WTC11 (cell line): ENCODE measurements at regions of chr21 and their contacts with region 1.

Region 1: DNA sequence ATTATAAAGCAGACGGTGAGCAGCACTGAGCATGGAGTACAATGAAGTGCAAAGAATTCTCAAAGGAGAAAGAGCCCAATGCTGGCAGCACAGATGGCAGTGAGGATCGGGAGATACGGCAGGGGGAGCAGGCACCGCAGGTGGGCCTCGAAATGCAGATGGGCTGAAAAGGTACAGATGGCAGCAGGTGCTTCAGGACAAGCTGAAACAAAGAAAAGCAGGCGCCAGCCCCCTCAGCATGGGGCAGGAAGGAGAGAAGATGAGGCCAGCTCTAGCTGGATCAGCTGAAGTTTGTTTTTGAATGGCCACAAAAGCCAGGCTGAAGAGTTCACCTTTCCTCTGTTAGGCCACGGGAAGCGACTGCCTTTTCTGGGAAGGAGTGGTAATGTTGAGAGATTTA is 7.7 kb downstream of the CFAP298 start:
- DNase-seq: peak; percentile 87
- ATAC-seq: peak; percentile 84
- H3K4me3 Mint-ChIP-seq: peak overlapping the region; percentile 53
- H3K27ac Mint-ChIP-seq: peak overlapping the region; percentile 95
- H3K4me1 Mint-ChIP-seq: peaks cover 65% of the 10 kb centered on the region
- H3K27me3 Mint-ChIP-seq: no peaks in the 10 kb centered on the region; the same call in 1 of the 2 replicates
- CTCF ChIP-seq: no peak

Region 2: GRCh38 chr21:32278518-32279376 is 325.7 kb before region 1 on chr21 and contains the start of gene MIS18A:
- CTCF ChIA-PET with region 1: interaction called, 12 read pairs
- POLR2A ChIA-PET with region 1: no interaction called
- DNase-seq: peak; percentile 96
- ATAC-seq: peak; percentile 92
- H3K4me3 Mint-ChIP-seq: peak within 1 kb of the TSS; percentile 99
- H3K27ac Mint-ChIP-seq: peak within 1 kb of the TSS; percentile 96
- H3K4me1 Mint-ChIP-seq: peaks cover 16% of the 10 kb centered on the region
- H3K27me3 Mint-ChIP-seq: no peaks in the 10 kb centered on the region
- CTCF ChIP-seq: no peak
- total RNA-seq, gene MIS18A: 55.9 to 60.6 TPM (median 58.4 TPM) in 3 replicates

Region 3: DNA sequence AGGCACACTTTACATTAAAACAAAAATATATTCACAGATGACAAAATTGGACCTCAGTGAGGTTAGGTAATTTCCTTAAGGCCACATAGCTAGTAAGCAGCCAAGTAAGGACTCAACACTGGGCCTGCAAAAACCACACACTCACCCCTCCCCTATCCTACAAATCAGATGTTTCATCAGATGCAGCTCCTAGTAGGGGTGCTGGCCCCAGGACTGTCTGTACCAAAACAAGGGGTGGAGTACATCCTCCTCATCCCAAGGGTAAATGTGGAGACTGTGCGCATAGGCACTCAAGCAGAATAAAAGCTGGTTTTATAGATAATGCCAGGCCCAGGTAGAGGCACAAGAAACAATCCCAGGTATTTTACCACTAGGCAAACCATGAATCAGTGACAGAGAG is 237.3 kb before region 1 on chr21:
- CTCF ChIA-PET with region 1: interaction called, 11 read pairs
- POLR2A ChIA-PET with region 1: no interaction called
- DNase-seq: no peak
- ATAC-seq: no peak
- H3K4me3 Mint-ChIP-seq: no peak overlapping the region
- H3K27ac Mint-ChIP-seq: no peak overlapping the region
- H3K4me1 Mint-ChIP-seq: peaks cover 3% of the 10 kb centered on the region
- H3K27me3 Mint-ChIP-seq: no peaks in the 10 kb centered on the region
- CTCF ChIP-seq: no peak

Region 4: GRCh38 chr21:32412162-32413014 is 192.1 kb before region 1 on chr21 and contains the start of gene EVA1C:
- CTCF ChIA-PET with region 1: interaction called, 24 read pairs
- POLR2A ChIA-PET with region 1: interaction called, 4 read pairs
- DNase-seq: peak; percentile 60
- ATAC-seq: peak; percentile 80
- H3K4me3 Mint-ChIP-seq: peak within 1 kb of the TSS; percentile 83
- H3K27ac Mint-ChIP-seq: no peak within 1 kb of the TSS
- H3K4me1 Mint-ChIP-seq: peaks cover 33% of the 10 kb centered on the region
- H3K27me3 Mint-ChIP-seq: peaks cover 60% of the 10 kb centered on the region
- CTCF ChIP-seq: no peak
- total RNA-seq, gene EVA1C: 2.3 to 3.6 TPM (median 3.1 TPM) in 3 replicates

Region 5: DNA sequence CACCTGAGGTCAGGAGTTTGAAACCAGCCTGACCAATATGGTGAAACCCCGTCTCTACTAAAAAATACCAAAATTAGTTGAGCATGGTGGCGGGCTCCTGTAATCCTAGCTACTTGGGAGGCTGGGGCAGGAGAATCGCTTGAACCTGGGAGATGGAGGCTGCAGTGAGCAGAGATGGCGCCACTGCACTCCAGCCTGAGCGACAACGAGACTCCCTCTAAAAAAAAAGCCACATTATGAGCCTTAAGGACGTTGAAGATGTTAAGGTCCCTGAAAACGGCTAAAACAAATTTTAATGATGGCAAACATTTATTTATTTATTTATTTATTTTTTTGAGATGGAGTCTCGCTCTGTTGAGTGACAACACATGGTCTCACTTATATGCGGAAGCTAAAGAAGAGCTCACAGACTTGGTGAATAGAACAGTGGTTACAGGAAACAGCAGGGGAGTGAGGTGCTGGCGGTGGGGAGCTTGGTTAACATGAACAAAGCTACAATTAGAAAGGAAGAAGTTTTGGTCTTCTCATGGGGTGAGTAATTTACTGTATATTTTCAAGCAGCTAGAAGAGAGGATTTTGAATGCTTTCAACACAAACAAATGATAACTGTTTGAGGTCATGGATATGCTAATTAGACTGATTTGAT is 66.2 kb before region 1 on chr21:
- CTCF ChIA-PET with region 1: interaction called, 10 read pairs
- POLR2A ChIA-PET with region 1: no interaction called
- DNase-seq: no peak
- ATAC-seq: peak; percentile 72
- H3K4me3 Mint-ChIP-seq: no peak overlapping the region
- H3K27ac Mint-ChIP-seq: peak overlapping the region; percentile 82
- H3K4me1 Mint-ChIP-seq: peaks cover 15% of the 10 kb centered on the region
- H3K27me3 Mint-ChIP-seq: no peaks in the 10 kb centered on the region
- CTCF ChIP-seq: no peak

Region 6: DNA sequence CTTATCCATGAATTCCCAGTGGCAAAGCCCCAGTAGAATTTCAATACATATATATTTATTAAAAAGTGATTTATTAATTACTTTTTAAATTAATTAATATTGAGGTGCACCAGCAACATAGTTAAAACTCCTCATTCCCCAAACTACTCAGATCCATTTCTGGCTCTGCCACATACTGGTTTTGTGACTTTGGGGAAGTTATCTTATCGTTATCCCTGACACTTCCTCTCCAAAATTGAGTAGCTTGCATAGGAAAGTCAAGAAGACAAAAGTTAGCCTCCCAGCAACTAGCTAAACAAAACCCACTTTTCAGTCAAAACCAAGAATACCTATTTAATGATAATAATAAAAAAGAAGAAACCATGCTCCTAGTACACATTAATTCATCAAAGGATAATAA is 55.0 kb before region 1 on chr21:
- CTCF ChIA-PET with region 1: no interaction called
- POLR2A ChIA-PET with region 1: no interaction called
- DNase-seq: no peak
- ATAC-seq: no peak
- H3K4me3 Mint-ChIP-seq: no peak overlapping the region
- H3K27ac Mint-ChIP-seq: no peak overlapping the region
- H3K4me1 Mint-ChIP-seq: peaks cover 9% of the 10 kb centered on the region
- H3K27me3 Mint-ChIP-seq: no peaks in the 10 kb centered on the region; the same call in 1 of the 2 replicates
- CTCF ChIP-seq: no peak

Region 7: GRCh38 chr21:32562426-32562825 is 42.0 kb before region 1 on chr21:
- CTCF ChIA-PET with region 1: interaction called, 21 read pairs
- POLR2A ChIA-PET with region 1: no interaction called
- DNase-seq: peak; percentile 39
- ATAC-seq: peak; percentile 63
- H3K4me3 Mint-ChIP-seq: no peak overlapping the region
- H3K27ac Mint-ChIP-seq: peak overlapping the region; percentile 94
- H3K4me1 Mint-ChIP-seq: peaks cover 49% of the 10 kb centered on the region
- H3K27me3 Mint-ChIP-seq: no peaks in the 10 kb centered on the region
- CTCF ChIP-seq: no peak

Region 8: DNA sequence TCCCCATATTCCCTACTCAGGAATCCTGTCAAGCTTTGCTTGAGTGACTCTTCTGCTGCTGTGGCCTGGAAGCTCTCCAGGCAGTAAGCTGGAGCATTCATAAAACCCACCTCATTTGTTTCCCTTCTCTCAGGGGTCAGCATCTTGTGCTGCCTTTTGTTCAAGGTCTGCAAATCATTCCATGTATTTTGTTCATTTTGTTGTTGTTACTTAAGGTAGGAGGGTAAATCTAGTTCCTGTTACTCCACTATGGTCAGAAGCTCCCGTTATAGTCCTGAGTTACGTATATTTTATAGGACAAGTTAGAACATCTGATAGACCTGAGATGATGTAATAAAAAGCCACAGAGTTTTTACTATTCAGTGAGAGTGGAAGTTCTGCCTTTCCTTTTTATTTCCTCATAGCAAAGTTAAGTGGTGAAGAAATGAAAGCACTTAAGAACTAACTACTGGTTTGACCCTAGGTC is 113.4 kb after region 1 on chr21:
- CTCF ChIA-PET with region 1: no interaction called
- POLR2A ChIA-PET with region 1: no interaction called
- DNase-seq: no peak
- ATAC-seq: no peak
- H3K4me3 Mint-ChIP-seq: no peak overlapping the region
- H3K27ac Mint-ChIP-seq: peak overlapping the region; percentile 5; the same call in 1 of the 2 replicates
- H3K4me1 Mint-ChIP-seq: no peaks in the 10 kb centered on the region
- H3K27me3 Mint-ChIP-seq: no peaks in the 10 kb centered on the region
- CTCF ChIP-seq: no peak

Region 9: GRCh38 chr21:32826329-32827167 is 222.1 kb after region 1 on chr21:
- CTCF ChIA-PET with region 1: interaction called, 11 read pairs
- POLR2A ChIA-PET with region 1: no interaction called
- DNase-seq: peak; percentile 22
- ATAC-seq: peak; percentile 94
- H3K4me3 Mint-ChIP-seq: no peak overlapping the region
- H3K27ac Mint-ChIP-seq: no peak overlapping the region
- H3K4me1 Mint-ChIP-seq: no peaks in the 10 kb centered on the region; the same call in 1 of the 2 replicates
- H3K27me3 Mint-ChIP-seq: no peaks in the 10 kb centered on the region
- CTCF ChIP-seq: no peak